ENCODE measurements at regions of chr18 and their contacts with region 1.

Region 1: DNA sequence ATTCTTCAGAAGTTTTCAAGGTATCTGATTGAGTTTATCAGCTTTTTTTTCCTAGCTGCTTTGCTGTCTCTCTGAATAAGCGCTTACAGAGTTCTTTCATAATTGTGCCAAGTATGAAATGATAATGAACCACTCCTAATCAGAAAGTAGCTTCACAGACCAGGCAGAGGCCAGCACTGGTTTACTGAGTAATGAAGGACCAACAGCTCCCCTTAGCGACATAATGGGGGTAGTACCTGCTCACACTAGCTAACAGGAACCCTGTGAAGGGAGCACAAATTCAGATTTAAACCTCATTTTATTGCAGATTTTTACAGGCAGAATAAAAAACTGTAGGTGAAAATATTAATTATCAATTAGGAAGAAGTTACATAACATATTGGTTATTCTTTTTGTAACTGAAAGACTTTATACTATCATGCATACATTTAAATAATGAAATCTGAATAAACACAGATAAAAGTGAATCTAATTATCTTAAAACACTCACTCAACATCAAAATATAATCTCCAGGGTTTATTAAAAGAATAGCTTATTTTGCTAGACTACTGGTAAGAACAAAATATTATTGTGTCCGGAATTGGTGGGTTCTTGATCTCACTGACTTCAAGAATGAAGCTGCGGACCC is 53.7 kb upstream of the LRRC30 start:
- DNase-seq: peak; percentile 44
- H3K4me3 ChIP-seq: no peak overlapping the region
- H3K27ac ChIP-seq: no peak overlapping the region
- H3K27me3 ChIP-seq: no peaks in the 10 kb centered on the region
- CTCF ChIP-seq: peak; percentile 81

Region 2: GRCh38 chr18:6885992-6886796 is 291.0 kb before region 1 on chr18:
- CTCF ChIA-PET with region 1: interaction called, 11 read pairs
- POLR2A ChIA-PET with region 1: no interaction called
- DNase-seq: peak; percentile 26
- H3K4me3 ChIP-seq: no peak overlapping the region
- H3K27ac ChIP-seq: no peak overlapping the region
- H3K27me3 ChIP-seq: no peaks in the 10 kb centered on the region
- CTCF ChIP-seq: peak; percentile 72

Region 3: DNA sequence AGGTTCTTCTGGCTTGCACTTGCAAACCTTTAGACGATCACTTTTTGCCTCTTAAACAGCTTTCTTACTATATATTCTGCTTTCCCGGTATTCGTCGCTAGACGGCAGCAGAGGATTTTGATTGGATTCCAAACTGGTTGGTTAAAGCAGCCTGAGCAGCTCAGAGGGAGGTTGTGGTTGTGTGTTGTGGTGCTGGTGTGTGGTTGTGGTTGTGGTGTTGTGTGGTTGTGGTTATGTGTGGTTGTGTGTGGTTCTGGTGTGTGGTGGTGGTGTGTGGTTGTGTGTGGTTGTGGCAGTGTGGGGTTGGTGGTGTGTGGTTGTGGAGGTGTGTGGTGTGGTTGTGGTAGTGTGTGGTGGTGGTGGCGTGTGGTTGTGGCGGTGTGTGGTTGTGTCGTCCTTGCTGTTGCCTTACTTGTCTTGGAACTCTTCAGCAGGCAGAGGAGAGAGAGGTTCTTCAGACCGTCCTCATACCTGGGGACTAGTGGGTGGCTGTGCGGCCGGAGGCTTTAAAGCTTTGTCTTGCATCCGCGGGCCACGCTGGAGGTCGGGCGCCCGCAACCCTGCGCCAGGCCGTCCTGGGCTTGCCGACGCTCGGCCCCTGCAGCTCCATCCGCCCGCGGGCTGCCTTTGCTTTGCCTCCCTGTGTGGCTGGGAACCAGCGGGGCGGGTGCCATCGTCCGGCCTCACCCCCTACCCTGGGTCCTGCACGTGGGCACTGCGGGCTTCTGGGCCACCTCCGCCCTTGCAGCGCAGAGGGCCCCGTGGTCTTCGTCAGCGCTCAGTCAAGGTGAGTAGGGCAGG is 256.9 kb before region 1 on chr18:
- CTCF ChIA-PET with region 1: interaction called, 79 read pairs
- POLR2A ChIA-PET with region 1: interaction called, 7 read pairs
- DNase-seq: peak; percentile 27
- H3K4me3 ChIP-seq: no peak overlapping the region
- H3K27ac ChIP-seq: no peak overlapping the region
- H3K27me3 ChIP-seq: peaks cover 6% of the 10 kb centered on the region
- CTCF ChIP-seq: peak; percentile 91

Region 4: GRCh38 chr18:7021994-7022840 is 155.0 kb before region 1 on chr18:
- CTCF ChIA-PET with region 1: interaction called, 11 read pairs
- POLR2A ChIA-PET with region 1: no interaction called
- DNase-seq: no peak
- H3K4me3 ChIP-seq: no peak overlapping the region
- H3K27ac ChIP-seq: no peak overlapping the region
- H3K27me3 ChIP-seq: no peaks in the 10 kb centered on the region
- CTCF ChIP-seq: peak; percentile 42

Region 5: GRCh38 chr18:7038330-7038851 is 138.8 kb before region 1 on chr18:
- CTCF ChIA-PET with region 1: interaction called, 92 read pairs
- POLR2A ChIA-PET with region 1: interaction called, 5 read pairs
- DNase-seq: peak; percentile 94
- H3K4me3 ChIP-seq: 0 out of 2 replicates have a peak overlapping the region, but pooled peaks have one; percentile 15
- H3K27ac ChIP-seq: peak overlapping the region; percentile 92
- H3K27me3 ChIP-seq: no peaks in the 10 kb centered on the region
- CTCF ChIP-seq: peak; percentile 71

Region 6: DNA sequence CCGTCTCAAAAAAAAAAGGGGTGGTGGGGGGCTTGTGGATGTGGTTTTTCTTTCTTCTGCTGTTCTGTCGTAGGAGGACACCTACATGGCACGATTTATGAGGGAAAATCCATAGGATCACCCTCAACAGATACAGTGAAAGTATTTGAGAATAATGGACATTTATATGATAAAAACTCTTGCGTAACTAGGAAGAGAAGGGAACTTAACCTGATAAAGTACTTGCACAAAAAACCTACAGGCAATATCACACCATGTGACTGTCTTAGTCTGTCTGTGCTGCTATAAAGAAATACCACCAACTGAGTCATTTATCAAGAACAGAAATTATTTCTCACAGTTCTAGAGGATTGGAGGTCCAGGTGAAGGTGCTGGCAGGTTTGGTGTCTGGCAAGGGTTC is 37.8 kb before region 1 on chr18:
- CTCF ChIA-PET with region 1: no interaction called
- POLR2A ChIA-PET with region 1: no interaction called
- DNase-seq: no peak
- H3K4me3 ChIP-seq: no peak overlapping the region
- H3K27ac ChIP-seq: no peak overlapping the region
- H3K27me3 ChIP-seq: no peaks in the 10 kb centered on the region
- CTCF ChIP-seq: no peak

Region 7: GRCh38 chr18:7164323-7165004 is 12.8 kb before region 1 on chr18:
- CTCF ChIA-PET with region 1: interaction called, 17 read pairs
- POLR2A ChIA-PET with region 1: no interaction called
- DNase-seq: no peak
- H3K4me3 ChIP-seq: no peak overlapping the region
- H3K27ac ChIP-seq: no peak overlapping the region
- H3K27me3 ChIP-seq: no peaks in the 10 kb centered on the region
- CTCF ChIP-seq: peak; percentile 40

Measured in AG04450 (cell line).